Left ventricle myocardium superior (tissue), 1 donor: ENCODE measurements at regions of chr4 and their contacts with region 1.

Region 1: DNA sequence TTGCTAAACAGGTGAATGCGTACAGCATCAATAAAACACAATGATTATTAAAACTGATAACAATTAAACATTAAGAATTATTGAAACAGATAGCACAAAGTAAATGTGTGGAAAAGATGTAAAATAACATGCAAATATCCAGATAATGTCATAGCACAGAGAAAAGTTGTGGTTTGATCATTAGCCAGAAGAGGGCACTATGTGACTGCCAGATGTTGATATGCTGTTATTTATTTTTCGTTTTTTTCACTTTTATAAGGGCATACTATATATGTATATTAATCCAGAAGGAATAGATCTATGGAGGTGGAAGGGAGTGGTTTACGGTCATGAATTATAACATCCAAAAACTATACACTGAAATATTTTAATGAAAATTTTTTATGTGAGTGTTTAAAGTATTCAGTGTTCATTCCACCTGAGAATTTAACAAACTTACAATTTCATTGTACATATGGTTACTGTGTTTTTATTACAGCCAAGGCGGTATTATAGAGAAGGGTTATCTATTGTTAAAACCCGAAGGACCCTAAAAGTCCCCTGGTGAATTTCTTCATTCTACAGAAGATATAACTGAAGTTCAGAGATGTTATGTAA is 211.9 kb upstream of the UGT8 start:
- DNase-seq: no peak
- ATAC-seq: no peak

Region 2: DNA sequence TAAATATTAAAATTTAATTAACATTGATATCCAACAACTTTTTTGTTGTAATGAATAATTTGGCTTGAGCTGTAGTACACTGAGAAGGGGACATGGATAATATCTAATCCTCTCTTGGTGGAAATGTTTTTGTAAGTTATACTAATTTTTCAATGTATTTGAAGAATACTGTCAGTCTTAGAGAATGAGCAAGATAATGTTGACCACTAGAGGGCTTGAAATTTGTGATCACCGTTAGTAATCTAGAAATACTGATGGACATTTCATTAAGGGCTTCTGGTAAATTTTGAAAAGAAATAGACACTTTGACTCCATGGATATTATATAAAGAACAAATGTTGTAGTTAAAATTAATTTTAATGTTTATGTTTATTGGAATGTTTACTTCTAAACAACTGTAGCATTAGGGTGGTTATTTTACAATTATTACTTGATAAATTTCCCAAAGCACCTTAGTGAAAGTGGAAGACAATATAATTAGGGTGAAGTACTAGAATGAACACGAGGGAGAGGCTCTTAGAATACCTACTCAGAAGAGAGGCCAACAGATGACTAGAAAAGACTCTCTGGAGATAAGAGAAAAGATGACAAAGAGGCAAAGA is 605.2 kb before region 1 on chr4:
- intact Hi-C with region 1: loop called (anchors 5 kb)
- DNase-seq: no peak
- ATAC-seq: no peak

Region 3: GRCh38 chr4:114659386-114660008 is 272.8 kb after region 1 on chr4:
- intact Hi-C with region 1: loop called (anchors 5 kb)
- DNase-seq: no peak
- ATAC-seq: peak; percentile 79

Region 4: DNA sequence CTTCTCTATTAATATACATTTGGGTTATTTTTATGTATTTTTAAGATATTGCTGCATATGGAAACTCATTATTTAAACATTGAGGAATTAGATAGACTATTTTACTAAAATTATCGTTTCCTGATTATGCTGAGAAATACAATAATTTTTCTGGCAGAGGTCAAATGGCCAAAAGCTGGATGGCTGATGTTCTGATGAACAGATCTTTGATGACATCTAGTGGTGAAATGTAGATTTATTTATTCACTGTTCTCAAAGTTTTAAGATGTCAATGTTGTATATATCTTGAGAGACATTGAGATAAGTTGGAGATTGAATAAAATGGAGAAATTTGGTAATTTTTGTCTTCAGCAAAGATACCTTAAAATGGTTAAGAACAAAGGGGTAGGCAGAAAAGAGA is 308.0 kb after region 1 on chr4:
- intact Hi-C with region 1: loop called (anchors 10 kb)
- DNase-seq: no peak
- ATAC-seq: no peak

Region 5: DNA sequence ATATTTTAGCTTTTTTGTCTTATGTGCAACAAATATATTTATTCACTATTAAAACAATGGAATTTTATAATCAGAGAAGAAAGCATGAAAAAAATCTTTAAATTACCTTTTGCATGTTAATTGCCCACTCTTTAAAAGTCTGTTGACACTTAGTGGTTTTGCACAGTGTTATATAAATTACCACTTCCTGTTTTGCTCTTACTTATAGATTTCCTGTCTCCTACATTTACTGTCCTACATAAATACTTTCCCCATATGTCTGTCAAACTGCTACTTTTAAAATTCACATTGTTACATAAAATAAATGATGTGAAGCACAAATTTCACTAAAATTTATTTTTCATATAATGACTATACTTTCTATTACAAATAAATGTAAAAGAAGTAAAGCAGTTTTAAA is 887.8 kb after region 1 on chr4:
- intact Hi-C with region 1: no loop called
- DNase-seq: no peak
- ATAC-seq: no peak